Endothelial cell of umbilical vein (primary cell): ENCODE measurements at regions of chr5 and their contacts with region 1.

Region 1: GRCh38 chr5:72597456-72597948 is 90.3 kb upstream of the ZNF366 start:
- DNase-seq: peak; percentile 94
- H3K4me3 ChIP-seq: no peak overlapping the region
- H3K27ac ChIP-seq: peak overlapping the region; percentile 88
- H3K4me1 ChIP-seq: peaks cover 60% of the 10 kb centered on the region
- H3K27me3 ChIP-seq: no peaks in the 10 kb centered on the region
- CTCF ChIP-seq: no peak
- POLR2A ChIP-seq: no peak

Region 2: GRCh38 chr5:72387985-72388384 is 209.5 kb before region 1 on chr5:
- CTCF ChIA-PET with region 1: no interaction called
- POLR2A ChIA-PET with region 1: no interaction called
- dilution Hi-C with region 1: no loop called
- intact Hi-C with region 1: loop called (anchors 5 kb)
- DNase-seq: peak; percentile 90
- H3K4me3 ChIP-seq: no peak overlapping the region
- H3K27ac ChIP-seq: peak overlapping the region; percentile 97
- H3K4me1 ChIP-seq: peaks cover 43% of the 10 kb centered on the region
- H3K27me3 ChIP-seq: no peaks in the 10 kb centered on the region
- CTCF ChIP-seq: no peak
- POLR2A ChIP-seq: no peak

Region 3: DNA sequence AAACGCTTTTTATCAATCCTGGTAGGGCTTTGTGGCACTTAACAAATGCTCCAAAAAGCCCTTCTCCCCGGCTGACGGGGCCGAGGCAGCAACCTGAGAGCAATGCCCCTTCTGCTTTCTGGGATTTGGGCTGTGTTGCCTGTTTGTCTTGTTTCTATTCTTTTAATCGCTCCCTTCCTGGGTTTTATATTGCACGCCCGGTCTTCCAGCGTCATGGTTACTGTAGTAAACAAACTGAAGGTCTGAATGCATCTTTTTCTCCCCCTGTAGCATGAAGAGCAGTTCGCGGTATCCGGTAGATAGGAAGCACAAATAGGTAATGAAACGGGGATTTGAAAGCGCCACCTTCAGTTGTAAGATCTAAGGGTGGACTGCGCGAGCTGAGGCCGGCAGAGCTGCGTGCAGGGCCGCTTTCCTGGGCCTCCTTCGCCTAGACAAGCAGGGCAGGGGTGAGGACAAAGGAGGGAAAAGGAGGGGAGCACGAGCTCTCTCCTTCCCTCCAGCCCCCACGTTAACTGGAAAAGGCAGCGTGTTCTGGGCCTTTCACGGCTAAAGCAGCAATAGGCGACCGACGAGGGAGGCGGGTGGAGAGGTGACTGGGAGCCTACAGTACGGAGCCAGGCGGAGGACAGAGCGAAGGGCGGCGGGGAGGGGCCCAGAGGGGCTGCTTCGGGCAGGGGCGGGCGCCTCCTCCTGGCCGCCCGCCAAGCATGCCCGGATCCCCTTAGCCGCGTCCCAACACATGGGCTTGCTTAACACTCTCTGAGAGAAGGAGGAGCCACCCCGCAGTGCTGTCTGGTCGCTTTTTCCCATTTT is 40.9 kb before region 1 on chr5:
- CTCF ChIA-PET with region 1: interaction called, 9 read pairs
- POLR2A ChIA-PET with region 1: no interaction called
- dilution Hi-C with region 1: no loop called
- intact Hi-C with region 1: loop called (anchors 1 kb)
- DNase-seq: peak; percentile 85
- H3K4me3 ChIP-seq: peak overlapping the region in 1 of 3 experiments; percentile 4
- H3K27ac ChIP-seq: peak overlapping the region; percentile 97
- H3K4me1 ChIP-seq: peaks cover 83% of the 10 kb centered on the region
- H3K27me3 ChIP-seq: no peaks in the 10 kb centered on the region
- CTCF ChIP-seq: no peak
- POLR2A ChIP-seq: peak; percentile 92